ENCODE measurements at regions of chr17 and their contacts with region 1.

Region 1: GRCh38 chr17:57404073-57404472 is 147.8 kb downstream of the MSI2 start:
- DNase-seq: no peak
- H3K4me3 ChIP-seq: no peak overlapping the region
- H3K27ac ChIP-seq: peak overlapping the region in 1 of 2 donors; percentile 57
- H3K4me1 ChIP-seq: peaks cover 0 to 18% of the 10 kb centered on the region in 2 donors
- H3K27me3 ChIP-seq: no peaks in the 10 kb centered on the region
- CTCF ChIP-seq: no peak
- POLR2A ChIP-seq: no peak

Region 2: GRCh38 chr17:57415751-57416207 is 11.7 kb after region 1 on chr17:
- intact Hi-C with region 1: loop called (anchors 1 kb)
- DNase-seq: no peak
- H3K4me3 ChIP-seq: no peak overlapping the region
- H3K27ac ChIP-seq: no peak overlapping the region
- H3K4me1 ChIP-seq: no peaks in the 10 kb centered on the region
- H3K27me3 ChIP-seq: no peaks in the 10 kb centered on the region
- CTCF ChIP-seq: no peak
- POLR2A ChIP-seq: no peak

Measured in breast epithelium (tissue), 4 donors.